Right lobe of liver (tissue), 6 donors: ENCODE measurements at regions of chr15 and their contacts with region 1.

Region 1: GRCh38 chr15:72312605-72313447 is 7.1 kb downstream of the CELF6 start:
- DNase-seq: peak; percentile 60 to 82 (median 79)
- ATAC-seq: peak; percentile 92 to 98 (median 96)
- H3K4me3 ChIP-seq: no peak overlapping the region
- H3K27ac ChIP-seq: no peak overlapping the region
- H3K4me1 ChIP-seq: no peaks in the 10 kb centered on the region
- H3K27me3 ChIP-seq: no peaks in the 10 kb centered on the region
- CTCF ChIP-seq: peak; percentile 59 to 78 (median 64)
- POLR2A ChIP-seq: no peak

Region 2: GRCh38 chr15:72491768-72492167 is 178.9 kb after region 1 on chr15:
- intact Hi-C with region 1: no loop called
- DNase-seq: no peak
- ATAC-seq: peak in 1 of 4 donors; percentile 71
- H3K4me3 ChIP-seq: no peak overlapping the region
- H3K27ac ChIP-seq: no peak overlapping the region
- H3K4me1 ChIP-seq: peaks cover 0 to 49% (median 10%) of the 10 kb centered on the region in 4 donors
- H3K27me3 ChIP-seq: no peaks in the 10 kb centered on the region
- CTCF ChIP-seq: no peak
- POLR2A ChIP-seq: no peak

Region 3: DNA sequence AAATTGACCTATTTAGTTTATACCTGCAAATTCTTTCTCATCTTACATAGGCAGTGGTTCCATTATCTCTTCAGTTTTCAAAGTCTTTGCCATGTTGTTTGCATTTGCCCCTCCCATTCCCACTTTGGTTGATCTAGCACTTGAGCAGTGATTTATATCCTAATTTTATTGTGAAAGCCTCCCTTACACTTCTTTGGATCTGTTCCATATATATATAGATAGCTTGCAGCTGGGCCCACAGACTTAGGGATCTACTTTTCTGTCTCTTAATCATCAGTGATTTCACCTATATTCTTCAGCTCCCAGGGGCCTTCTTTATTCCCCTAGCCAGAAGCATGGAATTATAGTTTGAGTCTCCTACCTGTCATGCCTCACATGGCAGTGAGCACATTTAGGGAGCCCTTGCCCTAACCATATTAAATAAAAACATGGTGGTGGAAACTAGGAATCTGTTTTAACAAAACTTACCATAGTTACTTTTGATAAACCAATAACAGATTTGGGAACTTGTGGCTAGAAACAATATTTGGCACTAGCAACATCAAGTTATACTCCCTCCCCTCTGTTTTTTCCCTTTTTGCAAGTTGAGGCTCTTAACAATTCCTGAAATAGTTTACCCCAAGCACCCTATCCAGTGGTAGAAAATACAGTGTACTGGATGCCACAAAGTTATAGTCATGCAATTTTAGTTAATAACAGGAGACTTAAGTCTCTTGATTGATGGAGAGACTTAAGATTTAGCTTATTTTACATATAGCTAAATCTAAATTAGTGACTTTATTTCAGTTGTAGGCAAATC is 203.0 kb after region 1 on chr15:
- intact Hi-C with region 1: no loop called
- DNase-seq: no peak
- ATAC-seq: no peak
- H3K4me3 ChIP-seq: no peak overlapping the region
- H3K27ac ChIP-seq: no peak overlapping the region
- H3K4me1 ChIP-seq: peaks cover 0 to 7% (median 0%) of the 10 kb centered on the region in 4 donors
- H3K27me3 ChIP-seq: no peaks in the 10 kb centered on the region
- CTCF ChIP-seq: no peak
- POLR2A ChIP-seq: no peak

Region 4: GRCh38 chr15:72671535-72671934 is 358.7 kb after region 1 on chr15:
- intact Hi-C with region 1: loop called in 1 of 2 experiments (anchors 10 kb)
- DNase-seq: no peak
- ATAC-seq: no peak
- H3K4me3 ChIP-seq: no peak overlapping the region
- H3K27ac ChIP-seq: no peak overlapping the region
- H3K4me1 ChIP-seq: no peaks in the 10 kb centered on the region
- H3K27me3 ChIP-seq: no peaks in the 10 kb centered on the region
- CTCF ChIP-seq: no peak
- POLR2A ChIP-seq: no peak